Heart right ventricle (tissue), 16 donors: ENCODE measurements at regions of chr17 and their contacts with region 1.

Region 1: GRCh38 chr17:35804658-35805192 is 4.6 kb upstream of the TAF15 start:
- DNase-seq: peak in 1 of 2 donors; percentile 64
- ATAC-seq: peak; percentile 15 to 55 (median 36)
- H3K4me3 ChIP-seq: no peak overlapping the region
- H3K27ac ChIP-seq: no peak overlapping the region
- H3K4me1 ChIP-seq: peaks cover 2 to 42% (median 35%) of the 10 kb centered on the region in 9 donors
- H3K27me3 ChIP-seq: no peaks in the 10 kb centered on the region
- CTCF ChIP-seq: peak; percentile 76 to 98 (median 85)

Region 2: GRCh38 chr17:35764123-35764991 is 40.4 kb before region 1 on chr17:
- intact Hi-C with region 1: loop called (anchors 1 to 5 kb)
- DNase-seq: peak; percentile 81 to 91
- ATAC-seq: peak; percentile 93 to 98 (median 96)
- H3K4me3 ChIP-seq: peak overlapping the region in 9 of 10 donors; percentile 34 to 62 (median 60)
- H3K27ac ChIP-seq: peak overlapping the region in 2 of 10 donors; percentile 41 to 44
- H3K4me1 ChIP-seq: peaks cover 2 to 28% (median 8%) of the 10 kb centered on the region in 9 donors
- H3K27me3 ChIP-seq: peaks cover 0 to 10% (median 0%) of the 10 kb centered on the region in 7 donors
- CTCF ChIP-seq: peak; percentile 89 to 97 (median 96)

Region 3: GRCh38 chr17:35841505-35841904 is 36.8 kb after region 1 on chr17:
- intact Hi-C with region 1: no loop called
- DNase-seq: no peak
- ATAC-seq: no peak
- H3K4me3 ChIP-seq: no peak overlapping the region
- H3K27ac ChIP-seq: no peak overlapping the region
- H3K4me1 ChIP-seq: no peaks in the 10 kb centered on the region
- H3K27me3 ChIP-seq: no peaks in the 10 kb centered on the region
- CTCF ChIP-seq: no peak